ENCODE measurements at regions of chr16 and their contacts with region 1.

Region 1: DNA sequence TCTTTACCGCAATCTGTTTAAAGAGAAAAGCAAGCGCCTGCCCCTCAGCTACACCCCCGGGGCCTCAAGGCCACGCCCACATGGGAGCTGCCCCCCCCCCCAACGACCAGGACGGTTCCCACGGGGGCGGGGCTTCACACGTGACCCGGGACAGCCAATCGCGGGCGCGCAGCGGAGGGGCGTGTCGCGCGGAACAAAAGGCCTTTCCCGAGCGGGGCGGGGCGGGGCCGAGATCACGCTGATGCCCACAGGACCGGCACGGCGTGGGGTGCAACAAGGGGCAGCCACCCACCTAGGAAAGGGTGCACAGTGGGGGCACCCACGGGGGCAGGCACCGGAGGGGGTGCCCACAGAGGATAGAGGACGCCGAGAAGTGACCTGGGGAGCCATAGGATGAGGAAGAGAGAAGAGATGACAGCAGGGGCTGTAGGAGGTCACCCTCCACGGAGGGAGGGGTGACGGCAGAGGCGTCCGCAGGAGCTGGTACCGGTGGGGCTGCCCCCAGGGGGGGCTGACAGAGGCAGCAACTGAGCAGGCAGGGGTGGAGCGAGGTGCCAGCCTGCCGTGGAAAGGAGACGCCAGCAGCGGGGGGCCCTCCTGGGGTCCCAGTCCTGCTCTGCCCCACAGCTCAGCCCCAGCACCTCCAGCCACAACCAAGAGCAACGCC is 6.2 kb downstream of the UNKL start:
- DNase-seq: peak; percentile 93
- H3K4me3 ChIP-seq: peak overlapping the region; percentile 12 to 32
- H3K27ac ChIP-seq: peak overlapping the region; percentile 20 to 37
- H3K4me1 ChIP-seq: peaks cover 3% of the 10 kb centered on the region
- H3K27me3 ChIP-seq: no peaks in the 10 kb centered on the region
- CTCF ChIP-seq: no peak
- POLR2A ChIP-seq: no peak

Region 2: DNA sequence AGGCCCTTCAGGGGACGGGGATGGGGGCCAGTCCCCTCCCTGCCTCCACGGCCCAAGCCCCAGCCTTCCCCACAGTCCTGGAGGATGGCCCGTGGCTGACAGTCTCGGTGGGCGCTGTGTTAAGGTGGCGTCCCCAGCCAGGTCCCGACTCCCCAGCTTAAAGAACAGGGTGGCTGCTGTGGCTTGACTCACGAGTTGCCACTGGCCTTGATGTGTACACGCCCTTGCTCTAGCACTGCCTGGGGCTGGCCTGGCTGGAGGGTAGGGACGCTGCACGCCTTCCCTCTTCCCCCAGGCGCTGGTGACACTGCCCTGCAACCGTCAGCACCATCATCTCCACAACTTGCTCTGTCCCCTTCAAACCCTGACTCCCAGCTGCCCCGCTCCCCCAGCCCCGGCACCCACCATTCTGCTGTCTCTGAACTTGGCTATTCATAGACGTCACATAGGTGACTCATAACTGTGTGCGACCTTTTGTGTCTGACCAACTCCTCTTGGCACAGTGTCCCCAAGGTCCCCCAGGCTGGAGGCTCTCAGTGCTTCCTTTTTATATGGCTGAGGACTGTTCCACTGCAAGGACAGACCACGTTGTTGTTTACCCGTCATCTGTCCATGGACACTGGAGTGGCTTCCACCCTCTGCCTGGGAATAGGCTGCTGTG is 50.3 kb before region 1 on chr16:
- intact Hi-C with region 1: loop called (anchors 5 kb)
- DNase-seq: no peak
- H3K4me3 ChIP-seq: no peak overlapping the region
- H3K27ac ChIP-seq: no peak overlapping the region
- H3K4me1 ChIP-seq: no peaks in the 10 kb centered on the region
- H3K27me3 ChIP-seq: no peaks in the 10 kb centered on the region
- CTCF ChIP-seq: no peak
- POLR2A ChIP-seq: no peak